B cell (primary cell): ENCODE measurements at regions of chr4 and their contacts with region 1.

Region 1: GRCh38 chr4:54064295-54065111 is at the start of gene CHIC2:
- DNase-seq: peak; percentile 98
- ATAC-seq: peak; percentile 89
- H3K4me3 ChIP-seq: peak within 1 kb of the TSS; percentile 77 to 99 (median 89)
- H3K4me3 Mint-ChIP-seq: peak within 1 kb of the TSS; percentile 95
- H3K27ac ChIP-seq: peak within 1 kb of the TSS; percentile 79 to 98
- H3K27ac Mint-ChIP-seq: peak within 1 kb of the TSS; percentile 95
- H3K4me1 ChIP-seq: peaks cover 17 to 33% of the 10 kb centered on the region in 2 donors
- H3K4me1 Mint-ChIP-seq: peaks cover 39% of the 10 kb centered on the region
- H3K27me3 ChIP-seq: no peaks in the 10 kb centered on the region
- H3K27me3 Mint-ChIP-seq: no peaks in the 10 kb centered on the region
- CTCF ChIP-seq: no peak
- total RNA-seq, gene CHIC2: 34.9 and 37.7 TPM in 2 replicates

Region 2: DNA sequence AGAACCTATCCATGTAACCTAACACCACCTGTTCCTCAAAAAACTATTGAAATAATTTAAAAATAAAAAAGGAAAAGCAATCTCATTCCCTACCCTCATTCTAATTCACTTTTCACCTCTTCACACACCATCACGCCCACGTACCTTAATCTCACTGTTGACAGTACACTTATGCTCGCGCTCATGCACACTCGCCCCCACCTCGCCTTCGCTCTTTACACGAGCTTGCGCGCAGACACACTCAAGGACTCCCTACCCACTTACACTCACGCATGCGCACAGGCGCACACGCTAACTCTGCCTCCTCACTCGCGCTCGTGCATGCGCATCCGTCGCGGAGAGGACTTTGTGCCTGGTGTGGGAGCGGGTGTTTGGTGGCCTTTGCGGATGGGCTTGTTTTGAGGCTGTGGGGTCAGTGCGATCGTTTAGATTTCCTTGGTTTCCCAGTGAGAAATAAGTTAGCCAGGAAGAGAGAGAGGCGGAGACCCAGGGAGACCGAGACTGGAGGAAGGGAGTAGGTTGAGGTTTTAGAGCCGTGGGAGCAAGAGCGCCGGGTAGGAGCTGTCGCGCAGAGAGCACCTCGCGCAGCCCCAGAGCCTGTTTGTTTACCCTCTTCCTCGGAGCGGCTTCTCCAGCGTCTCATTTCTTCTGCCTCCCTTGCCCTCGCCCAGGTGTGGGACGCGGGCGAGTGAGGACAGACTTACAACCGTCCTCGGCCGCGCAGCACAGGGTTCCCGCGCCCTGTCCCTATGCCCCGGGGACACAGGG is 27.3 kb after region 1 on chr4:
- CTCF ChIA-PET with region 1: interaction called, 3 read pairs
- POLR2A ChIA-PET with region 1: interaction called, 3 read pairs
- intact Hi-C with region 1: loop called (anchors 1 kb)
- DNase-seq: peak; percentile 83
- ATAC-seq: peak; percentile 79
- H3K4me3 ChIP-seq: peak overlapping the region; percentile 41 to 59 (median 52)
- H3K4me3 Mint-ChIP-seq: peak overlapping the region; percentile 89
- H3K27ac ChIP-seq: no peak overlapping the region
- H3K27ac Mint-ChIP-seq: peak overlapping the region; percentile 55
- H3K4me1 ChIP-seq: peaks cover 33% of the 10 kb centered on the region in 2 donors
- H3K4me1 Mint-ChIP-seq: peaks cover 33% of the 10 kb centered on the region
- H3K27me3 ChIP-seq: peaks cover 0 to 67% (median 58%) of the 10 kb centered on the region in 4 experiments
- H3K27me3 Mint-ChIP-seq: peaks cover 78% of the 10 kb centered on the region
- CTCF ChIP-seq: no peak

Region 3: GRCh38 chr4:54103190-54103574 is 38.7 kb after region 1 on chr4:
- CTCF ChIA-PET with region 1: no interaction called
- POLR2A ChIA-PET with region 1: no interaction called
- intact Hi-C with region 1: no loop called
- DNase-seq: peak; percentile 24
- ATAC-seq: no peak
- H3K4me3 ChIP-seq: no peak overlapping the region
- H3K4me3 Mint-ChIP-seq: peak overlapping the region; percentile 58
- H3K27ac ChIP-seq: no peak overlapping the region
- H3K27ac Mint-ChIP-seq: peak overlapping the region; percentile 37
- H3K4me1 ChIP-seq: peaks cover 56 to 69% of the 10 kb centered on the region in 2 donors
- H3K4me1 Mint-ChIP-seq: peaks cover 57% of the 10 kb centered on the region
- H3K27me3 ChIP-seq: peaks cover 0 to 94% (median 71%) of the 10 kb centered on the region in 4 experiments
- H3K27me3 Mint-ChIP-seq: peaks cover 71% of the 10 kb centered on the region
- CTCF ChIP-seq: no peak

Region 4: GRCh38 chr4:54228056-54228527 is 163.6 kb after region 1 on chr4:
- CTCF ChIA-PET with region 1: no interaction called
- POLR2A ChIA-PET with region 1: no interaction called
- intact Hi-C with region 1: no loop called
- DNase-seq: peak; percentile 61
- ATAC-seq: no peak
- H3K4me3 ChIP-seq: peak overlapping the region in 2 of 5 experiments; percentile 12 to 57
- H3K4me3 Mint-ChIP-seq: peak overlapping the region; percentile 85
- H3K27ac ChIP-seq: no peak overlapping the region
- H3K27ac Mint-ChIP-seq: no peak overlapping the region
- H3K4me1 ChIP-seq: peaks cover 60 to 73% of the 10 kb centered on the region in 2 donors
- H3K4me1 Mint-ChIP-seq: peaks cover 52% of the 10 kb centered on the region
- H3K27me3 ChIP-seq: peaks cover 0 to 95% (median 73%) of the 10 kb centered on the region in 4 experiments
- H3K27me3 Mint-ChIP-seq: peaks cover 76% of the 10 kb centered on the region
- CTCF ChIP-seq: peak; percentile 44

Region 5: DNA sequence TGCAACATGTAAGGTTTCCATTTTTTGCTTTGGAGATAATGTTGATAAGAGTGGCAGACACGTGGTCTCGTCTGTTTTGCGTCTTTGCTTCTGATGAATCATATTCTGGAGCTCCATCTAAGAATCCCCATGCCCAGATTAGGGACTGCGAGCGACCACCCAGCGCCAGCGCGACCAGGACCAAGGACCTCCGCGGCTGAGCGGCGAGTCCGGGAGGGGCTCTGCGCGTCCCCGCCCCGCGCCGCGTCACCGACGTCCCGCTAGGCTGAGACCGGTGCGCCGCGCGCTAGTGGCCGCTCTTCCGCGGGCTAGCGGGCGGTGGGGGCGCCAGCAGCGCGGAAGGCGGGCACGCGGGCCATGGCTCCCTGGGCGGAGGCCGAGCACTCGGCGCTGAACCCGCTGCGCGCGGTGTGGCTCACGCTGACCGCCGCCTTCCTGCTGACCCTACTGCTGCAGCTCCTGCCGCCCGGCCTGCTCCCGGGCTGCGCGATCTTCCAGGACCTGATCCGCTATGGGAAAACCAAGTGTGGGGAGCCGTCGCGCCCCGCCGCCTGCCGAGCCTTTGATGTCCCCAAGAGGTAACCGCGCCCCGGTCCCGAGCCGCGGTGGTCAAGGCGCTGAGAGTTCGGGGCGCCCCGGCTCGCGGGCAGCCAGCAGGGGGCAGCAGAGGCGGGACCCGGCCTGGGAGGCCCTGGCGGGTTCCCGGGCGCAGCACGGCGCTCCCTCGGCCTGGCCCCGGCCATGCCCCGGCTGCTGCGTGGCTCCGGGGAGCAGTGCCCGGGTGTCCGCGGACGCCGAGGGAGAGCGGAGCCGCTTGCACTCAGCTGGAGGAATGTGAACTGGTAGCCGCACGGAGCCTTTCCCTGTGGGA is 1281.7 kb after region 1 on chr4 and contains the start of gene SRD5A3:
- CTCF ChIA-PET with region 1: no interaction called
- POLR2A ChIA-PET with region 1: no interaction called
- intact Hi-C with region 1: no loop called
- DNase-seq: peak; percentile 85
- ATAC-seq: peak; percentile 89
- H3K4me3 ChIP-seq: peak within 1 kb of the TSS; percentile 56 to 84 (median 73)
- H3K4me3 Mint-ChIP-seq: peak within 1 kb of the TSS; percentile 85
- H3K27ac ChIP-seq: peak within 1 kb of the TSS; percentile 69 to 85
- H3K27ac Mint-ChIP-seq: peak within 1 kb of the TSS; percentile 94
- H3K4me1 ChIP-seq: peaks cover 4 to 9% of the 10 kb centered on the region in 2 donors
- H3K4me1 Mint-ChIP-seq: peaks cover 10% of the 10 kb centered on the region
- H3K27me3 ChIP-seq: no peaks in the 10 kb centered on the region
- H3K27me3 Mint-ChIP-seq: no peaks in the 10 kb centered on the region
- CTCF ChIP-seq: peak; percentile 99
- total RNA-seq, gene SRD5A3: 3.6 and 4.0 TPM in 2 replicates